CD4-positive, alpha-beta T cell (primary cell): ENCODE measurements at regions of chr12 and their contacts with region 1.

Region 1: DNA sequence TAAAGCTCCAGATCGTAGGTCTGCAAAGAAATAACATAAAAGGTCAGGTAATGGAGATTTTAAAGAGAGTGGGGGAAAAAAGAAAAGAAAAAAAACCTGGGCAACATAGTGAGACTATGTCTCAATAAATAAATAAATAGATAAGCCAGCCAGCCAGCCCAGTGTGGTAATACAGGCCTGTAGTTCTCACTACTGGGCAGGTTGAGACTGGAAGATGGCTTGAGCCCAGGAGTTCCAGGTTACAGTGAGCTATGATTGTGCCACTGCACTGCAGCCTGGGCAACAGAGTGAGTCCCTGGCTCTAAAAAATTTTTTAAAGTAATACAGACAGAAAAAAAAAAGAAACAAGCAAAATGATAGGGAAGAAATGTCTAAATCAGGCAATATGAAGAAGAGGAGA is 43.2 kb upstream of the BBS10 start:
- DNase-seq: no peak
- ATAC-seq: no peak
- H3K4me3 ChIP-seq: no peak overlapping the region
- H3K4me3 Mint-ChIP-seq: no peak overlapping the region
- H3K27ac ChIP-seq: no peak overlapping the region
- H3K27ac Mint-ChIP-seq: no peak overlapping the region
- H3K4me1 ChIP-seq: no peaks in the 10 kb centered on the region
- H3K4me1 Mint-ChIP-seq: no peaks in the 10 kb centered on the region
- H3K27me3 ChIP-seq: no peaks in the 10 kb centered on the region
- H3K27me3 Mint-ChIP-seq: no peaks in the 10 kb centered on the region
- CTCF ChIP-seq: no peak

Region 2: GRCh38 chr12:75862692-75863471 is 528.6 kb before region 1 on chr12:
- CTCF ChIA-PET with region 1: no interaction called
- POLR2A ChIA-PET with region 1: no interaction called
- intact Hi-C with region 1: no loop called
- DNase-seq: no peak
- ATAC-seq: no peak
- H3K4me3 ChIP-seq: no peak overlapping the region
- H3K4me3 Mint-ChIP-seq: no peak overlapping the region
- H3K27ac ChIP-seq: no peak overlapping the region
- H3K27ac Mint-ChIP-seq: no peak overlapping the region
- H3K4me1 ChIP-seq: no peaks in the 10 kb centered on the region
- H3K4me1 Mint-ChIP-seq: no peaks in the 10 kb centered on the region
- H3K27me3 ChIP-seq: no peaks in the 10 kb centered on the region
- H3K27me3 Mint-ChIP-seq: no peaks in the 10 kb centered on the region
- CTCF ChIP-seq: no peak

Region 3: GRCh38 chr12:76462668-76463224 is 71.3 kb after region 1 on chr12:
- CTCF ChIA-PET with region 1: no interaction called
- POLR2A ChIA-PET with region 1: no interaction called
- intact Hi-C with region 1: no loop called
- DNase-seq: no peak
- ATAC-seq: no peak
- H3K4me3 ChIP-seq: no peak overlapping the region
- H3K4me3 Mint-ChIP-seq: no peak overlapping the region
- H3K27ac ChIP-seq: no peak overlapping the region
- H3K27ac Mint-ChIP-seq: peak overlapping the region; percentile 11
- H3K4me1 ChIP-seq: peaks cover 12% of the 10 kb centered on the region
- H3K4me1 Mint-ChIP-seq: peaks cover 57% of the 10 kb centered on the region
- H3K27me3 ChIP-seq: no peaks in the 10 kb centered on the region
- H3K27me3 Mint-ChIP-seq: no peaks in the 10 kb centered on the region
- CTCF ChIP-seq: no peak

Region 4: GRCh38 chr12:76586764-76587395 is 195.4 kb after region 1 on chr12:
- CTCF ChIA-PET with region 1: interaction called, 3 read pairs
- POLR2A ChIA-PET with region 1: no interaction called
- intact Hi-C with region 1: loop called in 1 of 2 experiments (anchors 5 kb)
- DNase-seq: peak in 12 of 14 experiments; percentile 4 to 74 (median 15)
- ATAC-seq: peak; percentile 83
- H3K4me3 ChIP-seq: no peak overlapping the region
- H3K4me3 Mint-ChIP-seq: no peak overlapping the region
- H3K27ac ChIP-seq: no peak overlapping the region
- H3K27ac Mint-ChIP-seq: no peak overlapping the region
- H3K4me1 ChIP-seq: no peaks in the 10 kb centered on the region
- H3K4me1 Mint-ChIP-seq: peaks cover 4% of the 10 kb centered on the region
- H3K27me3 ChIP-seq: no peaks in the 10 kb centered on the region
- H3K27me3 Mint-ChIP-seq: no peaks in the 10 kb centered on the region
- CTCF ChIP-seq: peak; percentile 86